Sigmoid colon (tissue), 7 donors: ENCODE measurements at regions of chr15 and their contacts with region 1.

Region 1: GRCh38 chr15:67456677-67457529 is 64.0 kb upstream of the C15orf61 start:
- DNase-seq: peak; percentile 80
- H3K4me3 ChIP-seq: no peak overlapping the region
- H3K27ac ChIP-seq: no peak overlapping the region
- H3K4me1 ChIP-seq: no peaks in the 10 kb centered on the region
- H3K27me3 ChIP-seq: no peaks in the 10 kb centered on the region
- CTCF ChIP-seq: peak; percentile 18 to 81 (median 60)
- EP300 ChIP-seq: no peak
- POLR2A ChIP-seq: no peak

Region 2: GRCh38 chr15:67413770-67414394 is 43.0 kb before region 1 on chr15:
- intact Hi-C with region 1: no loop called
- DNase-seq: no peak
- H3K4me3 ChIP-seq: no peak overlapping the region
- H3K27ac ChIP-seq: no peak overlapping the region
- H3K4me1 ChIP-seq: no peaks in the 10 kb centered on the region
- H3K27me3 ChIP-seq: no peaks in the 10 kb centered on the region
- CTCF ChIP-seq: no peak
- EP300 ChIP-seq: no peak
- POLR2A ChIP-seq: no peak

Region 3: GRCh38 chr15:67575039-67575502 is 118.2 kb after region 1 on chr15:
- intact Hi-C with region 1: no loop called
- DNase-seq: no peak
- H3K4me3 ChIP-seq: no peak overlapping the region
- H3K27ac ChIP-seq: no peak overlapping the region
- H3K4me1 ChIP-seq: no peaks in the 10 kb centered on the region
- H3K27me3 ChIP-seq: no peaks in the 10 kb centered on the region
- CTCF ChIP-seq: no peak
- EP300 ChIP-seq: no peak
- POLR2A ChIP-seq: no peak

Region 4: DNA sequence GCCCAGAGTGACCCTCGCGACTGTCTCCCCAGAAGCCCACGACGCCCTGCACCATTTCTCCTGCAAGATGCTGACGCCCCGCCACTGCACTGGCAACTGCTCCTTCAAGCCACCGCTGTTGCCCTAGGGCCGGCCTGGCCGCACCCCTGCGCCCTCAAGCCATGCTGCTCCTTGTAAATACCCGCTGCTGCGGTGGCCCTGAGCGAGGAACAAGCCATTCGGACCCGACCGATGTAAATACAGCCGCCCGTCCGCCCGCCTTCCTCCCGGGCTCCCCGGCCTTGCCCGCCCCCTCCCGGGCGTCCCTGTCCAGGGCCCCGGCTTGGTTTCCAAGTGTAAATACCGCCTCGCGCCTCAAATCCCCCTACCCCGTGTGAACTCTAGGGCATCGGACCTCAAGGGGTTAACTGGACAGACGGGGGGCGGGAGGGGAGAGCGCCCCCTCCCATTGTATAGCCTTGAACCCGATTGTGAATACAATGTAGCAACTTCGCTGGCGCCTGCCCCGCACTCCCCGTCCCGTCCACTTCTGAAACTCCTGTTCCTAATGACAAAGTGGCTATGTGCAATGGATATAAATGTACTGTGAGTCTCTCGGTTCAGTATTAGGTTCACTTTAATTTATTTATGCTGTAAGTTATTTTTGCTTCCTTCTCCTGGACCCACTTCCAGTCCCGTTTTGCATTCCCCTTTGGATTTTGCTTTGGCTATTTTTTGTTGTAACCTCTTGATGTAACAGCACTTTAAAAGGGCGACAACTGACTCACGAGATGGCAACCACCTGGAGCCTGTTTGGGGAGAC is 377.0 kb after region 1 on chr15:
- intact Hi-C with region 1: loop called (anchors 2 kb)
- DNase-seq: peak; percentile 59
- H3K4me3 ChIP-seq: peak overlapping the region in 2 of 4 donors; percentile 35 to 44
- H3K27ac ChIP-seq: no peak overlapping the region
- H3K4me1 ChIP-seq: peaks cover 0 to 60% (median 56%) of the 10 kb centered on the region in 4 donors
- H3K27me3 ChIP-seq: peaks cover 65 to 74% (median 71%) of the 10 kb centered on the region in 3 donors
- CTCF ChIP-seq: peak in 1 of 4 experiments; percentile 31
- EP300 ChIP-seq: no peak
- POLR2A ChIP-seq: no peak